Common myeloid progenitor, CD34-positive (primary cell): ENCODE measurements at regions of chr18 and their contacts with region 1.

Region 1: GRCh38 chr18:64119916-64120315 is 29.0 kb downstream of the LINC00305 start:
- DNase-seq: peak; percentile 16 to 48 (median 43)
- H3K4me3 ChIP-seq: no peak overlapping the region
- H3K27ac ChIP-seq: no peak overlapping the region
- H3K4me1 ChIP-seq: no peaks in the 10 kb centered on the region
- H3K27me3 ChIP-seq: no peaks in the 10 kb centered on the region

Region 2: DNA sequence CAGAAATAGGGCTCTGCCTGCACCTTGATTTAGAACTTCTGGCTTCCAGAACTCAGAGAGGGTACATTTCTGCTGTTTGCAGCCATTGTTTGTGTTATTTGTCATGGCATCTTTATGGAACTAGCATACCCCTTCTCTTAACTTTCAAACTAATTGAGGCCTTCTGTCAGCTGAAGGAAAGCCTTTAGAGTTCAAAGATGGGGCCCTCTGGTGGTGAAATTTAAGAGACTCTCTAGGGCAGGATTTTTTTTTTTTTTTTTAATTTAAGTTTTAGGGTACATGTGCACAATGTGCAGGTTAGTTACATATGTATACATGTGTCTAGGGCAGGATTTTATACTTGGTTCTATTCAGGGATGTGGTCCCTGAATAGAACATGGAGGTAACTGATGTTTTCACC is 289.6 kb after region 1 on chr18:
- CTCF ChIA-PET with region 1: interaction called, 17 read pairs
- POLR2A ChIA-PET with region 1: no interaction called
- DNase-seq: peak; percentile 52 to 72 (median 66)
- H3K4me3 ChIP-seq: no peak overlapping the region
- H3K27ac ChIP-seq: no peak overlapping the region
- H3K4me1 ChIP-seq: no peaks in the 10 kb centered on the region
- H3K27me3 ChIP-seq: no peaks in the 10 kb centered on the region